Right lobe of liver (tissue), 6 donors: ENCODE measurements at regions of chrX and their contacts with region 1.

Region 1: DNA sequence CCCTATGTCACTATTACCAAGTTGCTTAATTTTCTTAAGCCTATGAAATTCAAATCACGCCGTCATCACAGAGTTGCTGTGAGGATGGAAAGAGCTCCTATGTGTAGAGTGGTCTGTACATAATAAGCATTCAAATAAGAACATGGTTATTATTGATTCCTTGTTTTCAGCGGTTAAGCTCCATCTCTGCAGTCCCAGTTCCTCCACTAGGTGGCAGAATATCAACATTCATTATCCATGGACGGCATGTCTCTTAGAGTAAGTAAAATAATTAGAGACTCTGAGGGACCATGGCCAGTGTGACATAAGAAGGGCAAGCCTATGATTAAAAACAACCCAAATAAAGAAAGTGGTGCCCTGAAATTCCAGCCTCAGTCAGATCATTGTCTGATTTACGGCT is 132.5 kb upstream of the NHS start:
- DNase-seq: peak in 1 of 3 donors; percentile 39
- ATAC-seq: peak; percentile 50 to 80 (median 65)
- H3K4me3 ChIP-seq: no peak overlapping the region
- H3K27ac ChIP-seq: no peak overlapping the region
- H3K4me1 ChIP-seq: no peaks in the 10 kb centered on the region
- H3K27me3 ChIP-seq: no peaks in the 10 kb centered on the region
- CTCF ChIP-seq: peak; percentile 79 to 88 (median 86)
- POLR2A ChIP-seq: no peak

Region 2: GRCh38 chrX:17689971-17690409 is 447.5 kb after region 1 on chrX:
- intact Hi-C with region 1: loop called in 1 of 2 experiments (anchors 10 kb)
- DNase-seq: peak in 1 of 3 donors; percentile 42
- ATAC-seq: peak; percentile 80 to 92 (median 90)
- H3K4me3 ChIP-seq: no peak overlapping the region
- H3K27ac ChIP-seq: no peak overlapping the region
- H3K4me1 ChIP-seq: no peaks in the 10 kb centered on the region
- H3K27me3 ChIP-seq: no peaks in the 10 kb centered on the region
- CTCF ChIP-seq: peak; percentile 70 to 80 (median 76)
- POLR2A ChIP-seq: no peak